B cell (primary cell): ENCODE measurements at regions of chr17 and their contacts with region 1.

Region 1: DNA sequence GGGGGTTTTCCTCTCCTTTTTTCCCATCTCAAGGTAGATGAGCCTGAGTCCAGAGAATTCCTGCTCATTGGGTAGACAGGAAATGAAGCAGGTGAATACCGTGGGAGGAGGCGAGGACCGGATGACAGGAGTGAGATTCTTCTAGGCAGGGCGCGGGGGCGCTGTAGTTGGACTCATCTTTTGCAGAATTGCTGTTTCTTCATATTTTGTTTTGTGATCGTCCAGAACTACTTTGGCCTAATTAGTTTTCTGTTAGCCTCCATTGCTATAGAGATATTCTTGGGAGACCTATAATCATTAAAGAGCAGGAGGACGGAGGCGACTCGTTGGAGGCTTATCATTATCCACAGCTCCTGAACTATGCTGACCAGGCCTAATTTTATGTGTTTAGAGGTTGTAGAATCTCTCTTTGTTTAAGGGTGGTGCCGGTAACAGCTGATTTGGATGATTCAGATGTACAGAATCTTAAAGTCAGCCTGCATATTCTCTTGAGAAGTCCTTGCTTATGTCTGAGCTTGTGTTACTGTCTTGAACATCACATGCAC is 650 bp downstream of the ATP6V0A1 start:
- DNase-seq: peak; percentile 44
- ATAC-seq: no peak
- H3K4me3 ChIP-seq: peak overlapping the region; percentile 67 to 97 (median 95)
- H3K4me3 Mint-ChIP-seq: peak overlapping the region; percentile 97
- H3K27ac ChIP-seq: peak overlapping the region; percentile 78 to 84
- H3K27ac Mint-ChIP-seq: peak overlapping the region; percentile 93
- H3K4me1 ChIP-seq: peaks cover 52 to 61% of the 10 kb centered on the region in 2 donors
- H3K4me1 Mint-ChIP-seq: peaks cover 59% of the 10 kb centered on the region
- H3K27me3 ChIP-seq: no peaks in the 10 kb centered on the region
- H3K27me3 Mint-ChIP-seq: no peaks in the 10 kb centered on the region
- CTCF ChIP-seq: peak; percentile 6

Region 2: GRCh38 chr17:41186872-41187271 is 1272.5 kb before region 1 on chr17:
- CTCF ChIA-PET with region 1: no interaction called
- POLR2A ChIA-PET with region 1: no interaction called
- intact Hi-C with region 1: no loop called
- DNase-seq: no peak
- ATAC-seq: no peak
- H3K4me3 ChIP-seq: no peak overlapping the region
- H3K4me3 Mint-ChIP-seq: no peak overlapping the region
- H3K27ac ChIP-seq: no peak overlapping the region
- H3K27ac Mint-ChIP-seq: no peak overlapping the region
- H3K4me1 ChIP-seq: no peaks in the 10 kb centered on the region
- H3K4me1 Mint-ChIP-seq: no peaks in the 10 kb centered on the region
- H3K27me3 ChIP-seq: no peaks in the 10 kb centered on the region
- H3K27me3 Mint-ChIP-seq: peaks cover 43% of the 10 kb centered on the region
- CTCF ChIP-seq: no peak

Region 3: GRCh38 chr17:42436391-42436790 is 22.9 kb before region 1 on chr17:
- CTCF ChIA-PET with region 1: interaction called, 8 read pairs
- POLR2A ChIA-PET with region 1: interaction called, 10 read pairs
- intact Hi-C with region 1: no loop called
- DNase-seq: no peak
- ATAC-seq: no peak
- H3K4me3 ChIP-seq: no peak overlapping the region
- H3K4me3 Mint-ChIP-seq: no peak overlapping the region
- H3K27ac ChIP-seq: no peak overlapping the region
- H3K27ac Mint-ChIP-seq: no peak overlapping the region
- H3K4me1 ChIP-seq: peaks cover 6 to 7% of the 10 kb centered on the region in 2 donors
- H3K4me1 Mint-ChIP-seq: peaks cover 10% of the 10 kb centered on the region
- H3K27me3 ChIP-seq: peaks cover 0 to 5% (median 0%) of the 10 kb centered on the region in 4 experiments
- H3K27me3 Mint-ChIP-seq: no peaks in the 10 kb centered on the region
- CTCF ChIP-seq: no peak